Dorsolateral prefrontal cortex (tissue), 120 donors: ENCODE measurements at regions of chr10 and their contacts with region 1.

Region 1: DNA sequence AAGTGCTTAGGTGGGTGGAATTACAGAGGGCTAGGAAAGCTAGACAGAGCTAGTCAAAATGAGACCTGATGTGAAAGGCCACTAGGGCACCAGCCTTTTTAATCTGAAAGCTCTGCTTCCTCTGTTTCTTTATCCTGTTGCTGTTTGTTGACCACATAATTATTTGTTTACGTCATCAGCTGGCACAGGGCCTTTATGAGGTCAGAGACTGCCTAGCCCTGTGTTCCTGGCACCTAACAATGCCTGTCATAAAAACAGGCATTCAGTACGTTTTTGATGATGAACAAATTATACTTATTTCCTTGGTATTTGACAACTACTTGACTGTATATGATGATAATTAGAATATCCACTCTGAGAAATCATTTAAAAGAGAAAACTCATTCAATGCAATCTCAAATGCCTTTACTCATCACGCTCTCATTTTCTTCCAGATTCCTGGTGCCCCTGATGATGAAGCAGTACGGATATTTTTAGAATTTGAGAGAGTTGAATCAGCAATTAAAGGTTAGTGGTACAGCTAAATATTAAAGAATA is 26.0 kb downstream of the RBM17 start:
- DNase-seq: peak in 2 of 10 donors; percentile 49 to 71
- H3K4me3 ChIP-seq: peak overlapping the region in 2 of 59 donors; percentile 4 to 17
- H3K27ac ChIP-seq: peak overlapping the region; percentile 21 to 94 (median 81)
- H3K27me3 ChIP-seq: no peaks in the 10 kb centered on the region
- CTCF ChIP-seq: peak in 7 of 56 donors; percentile 7 to 26 (median 14)

Region 2: GRCh38 chr10:6020826-6021225 is 94.0 kb before region 1 on chr10:
- intact Hi-C with region 1: no loop called
- DNase-seq: no peak
- H3K4me3 ChIP-seq: no peak overlapping the region
- H3K27ac ChIP-seq: peak overlapping the region in 1 of 59 donors; percentile 6
- H3K27me3 ChIP-seq: no peaks in the 10 kb centered on the region
- CTCF ChIP-seq: no peak

Region 3: GRCh38 chr10:6144406-6145165 is 29.7 kb after region 1 on chr10:
- intact Hi-C with region 1: loop called in 1 of 2 experiments (anchors 5 kb)
- DNase-seq: peak; percentile 70 to 94 (median 86)
- H3K4me3 ChIP-seq: peak overlapping the region; percentile 54 to 94 (median 84)
- H3K27ac ChIP-seq: peak overlapping the region in 57 of 59 donors; percentile 23 to 94 (median 83)
- H3K27me3 ChIP-seq: no peaks in the 10 kb centered on the region
- CTCF ChIP-seq: peak in 45 of 56 donors; percentile 12 to 75 (median 47)

Region 4: DNA sequence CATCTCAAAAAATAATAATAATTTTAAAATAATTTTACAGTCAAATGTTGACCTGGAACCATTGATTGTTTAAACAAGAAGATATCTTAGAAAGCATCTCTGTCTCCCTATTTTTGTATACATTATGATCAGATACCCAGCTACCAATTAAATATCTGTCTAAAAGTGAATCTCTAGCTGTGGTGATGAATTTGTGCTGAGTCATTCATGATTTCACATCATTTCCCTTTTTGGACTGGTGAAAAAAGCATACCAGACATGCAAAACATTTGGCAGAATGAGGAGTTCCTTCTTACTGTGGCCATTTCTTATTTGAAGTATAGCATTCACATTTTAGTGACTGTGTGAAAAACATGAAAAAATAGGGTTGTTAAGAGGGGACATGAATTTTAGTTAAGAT is 1841.6 kb after region 1 on chr10:
- intact Hi-C with region 1: no loop called
- DNase-seq: no peak
- H3K4me3 ChIP-seq: no peak overlapping the region
- H3K27ac ChIP-seq: no peak overlapping the region
- H3K27me3 ChIP-seq: no peaks in the 10 kb centered on the region
- CTCF ChIP-seq: no peak